A673 (cell line): ENCODE measurements at regions of chr22 and their contacts with region 1.

Region 1: GRCh38 chr22:32796865-32797573 is 4.5 kb upstream of the TIMP3 start:
- DNase-seq: peak; percentile 68
- H3K4me3 ChIP-seq: no peak overlapping the region
- H3K27ac ChIP-seq: no peak overlapping the region
- H3K4me1 ChIP-seq: no peaks in the 10 kb centered on the region
- H3K27me3 ChIP-seq: peaks cover 27% of the 10 kb centered on the region
- CTCF ChIP-seq: peak; percentile 94

Region 2: DNA sequence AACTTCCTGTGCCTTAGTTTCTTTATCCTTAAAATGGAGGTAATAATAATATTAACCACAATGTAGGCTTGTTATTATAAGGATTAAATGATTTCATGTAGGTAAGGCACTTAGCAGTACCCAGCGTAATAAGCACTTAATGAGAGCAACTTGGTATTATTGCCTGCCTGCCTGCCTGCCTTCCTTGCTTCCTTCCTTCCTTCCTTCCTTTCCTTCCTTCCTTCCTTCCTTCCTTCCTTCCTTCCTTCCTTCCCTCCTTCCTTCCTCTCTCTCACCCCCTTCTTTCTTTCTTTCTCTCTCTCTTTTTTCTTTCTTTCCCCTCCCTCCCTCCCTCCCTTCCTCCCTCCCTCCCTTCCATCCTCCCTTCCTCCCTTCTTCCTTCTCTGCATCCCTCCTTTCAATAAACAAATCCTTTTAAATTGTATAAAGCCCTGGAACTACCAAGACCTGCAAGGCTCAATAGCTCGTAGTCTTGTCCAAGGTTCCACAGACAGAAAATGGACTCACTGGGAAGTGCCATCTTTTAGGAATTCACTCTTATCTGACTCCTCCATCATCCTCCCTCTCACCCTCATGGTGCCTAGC is 16.2 kb before region 1 on chr22:
- CTCF ChIA-PET with region 1: interaction called, 3 read pairs
- POLR2A ChIA-PET with region 1: interaction called, 24 read pairs
- intact Hi-C with region 1: no loop called
- DNase-seq: peak; percentile 18
- H3K4me3 ChIP-seq: no peak overlapping the region
- H3K27ac ChIP-seq: no peak overlapping the region
- H3K4me1 ChIP-seq: no peaks in the 10 kb centered on the region
- H3K27me3 ChIP-seq: no peaks in the 10 kb centered on the region
- CTCF ChIP-seq: no peak

Region 3: GRCh38 chr22:33000342-33001280 is 203.6 kb after region 1 on chr22:
- CTCF ChIA-PET with region 1: no interaction called
- POLR2A ChIA-PET with region 1: no interaction called
- intact Hi-C with region 1: loop called (anchors 5 kb)
- DNase-seq: peak; percentile 84
- H3K4me3 ChIP-seq: no peak overlapping the region
- H3K27ac ChIP-seq: no peak overlapping the region
- H3K4me1 ChIP-seq: peaks cover 6% of the 10 kb centered on the region
- H3K27me3 ChIP-seq: no peaks in the 10 kb centered on the region
- CTCF ChIP-seq: peak; percentile 92

Region 4: GRCh38 chr22:33130473-33130872 is 333.5 kb after region 1 on chr22:
- CTCF ChIA-PET with region 1: no interaction called
- POLR2A ChIA-PET with region 1: no interaction called
- intact Hi-C with region 1: no loop called
- DNase-seq: no peak
- H3K4me3 ChIP-seq: no peak overlapping the region
- H3K27ac ChIP-seq: no peak overlapping the region
- H3K4me1 ChIP-seq: no peaks in the 10 kb centered on the region
- H3K27me3 ChIP-seq: no peaks in the 10 kb centered on the region
- CTCF ChIP-seq: no peak